ENCODE measurements at regions of chr5 and their contacts with region 1.

Region 1: GRCh38 chr5:180605554-180606214 is 14.4 kb upstream of the SCGB3A1 start:
- DNase-seq: peak; percentile 65
- H3K4me3 Mint-ChIP-seq: no peak overlapping the region
- H3K27ac Mint-ChIP-seq: no peak overlapping the region
- H3K4me1 Mint-ChIP-seq: no peaks in the 10 kb centered on the region
- H3K27me3 Mint-ChIP-seq: no peaks in the 10 kb centered on the region

Region 2: DNA sequence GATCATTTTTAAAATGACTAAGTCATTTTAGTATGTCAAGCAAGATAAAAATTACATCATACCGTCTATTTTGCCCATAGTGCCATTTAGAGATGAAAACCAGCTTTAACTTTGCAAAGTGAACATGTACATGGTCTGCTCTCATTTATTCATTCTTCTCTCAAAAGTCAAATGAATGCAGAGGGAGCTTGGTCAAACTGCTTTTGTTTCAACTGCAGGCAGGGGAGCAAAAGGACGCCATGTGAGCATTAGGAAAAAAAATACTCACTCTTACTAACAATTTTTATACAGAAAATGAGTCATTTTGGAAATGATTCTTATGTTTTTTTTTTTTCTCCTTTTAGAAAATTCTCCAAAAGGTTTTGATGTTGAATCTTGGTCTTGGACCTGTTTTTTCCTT is 30.1 kb before region 1 on chr5:
- CTCF ChIA-PET with region 1: interaction called, 10 read pairs
- POLR2A ChIA-PET with region 1: no interaction called
- DNase-seq: no peak
- H3K4me3 Mint-ChIP-seq: no peak overlapping the region
- H3K27ac Mint-ChIP-seq: no peak overlapping the region
- H3K4me1 Mint-ChIP-seq: peaks cover 3% of the 10 kb centered on the region
- H3K27me3 Mint-ChIP-seq: no peaks in the 10 kb centered on the region

Measured in activated CD4-positive, alpha-beta memory T cell treated with anti-CD3 and anti-CD28 coated beads, Interleukin-2, amount 10 ng/mL, durations not matched to agents 7 days and 5 days (primary cell).